Left ventricle myocardium inferior (tissue), 1 donor: ENCODE measurements at regions of chr6 and their contacts with region 1.

Region 1: DNA sequence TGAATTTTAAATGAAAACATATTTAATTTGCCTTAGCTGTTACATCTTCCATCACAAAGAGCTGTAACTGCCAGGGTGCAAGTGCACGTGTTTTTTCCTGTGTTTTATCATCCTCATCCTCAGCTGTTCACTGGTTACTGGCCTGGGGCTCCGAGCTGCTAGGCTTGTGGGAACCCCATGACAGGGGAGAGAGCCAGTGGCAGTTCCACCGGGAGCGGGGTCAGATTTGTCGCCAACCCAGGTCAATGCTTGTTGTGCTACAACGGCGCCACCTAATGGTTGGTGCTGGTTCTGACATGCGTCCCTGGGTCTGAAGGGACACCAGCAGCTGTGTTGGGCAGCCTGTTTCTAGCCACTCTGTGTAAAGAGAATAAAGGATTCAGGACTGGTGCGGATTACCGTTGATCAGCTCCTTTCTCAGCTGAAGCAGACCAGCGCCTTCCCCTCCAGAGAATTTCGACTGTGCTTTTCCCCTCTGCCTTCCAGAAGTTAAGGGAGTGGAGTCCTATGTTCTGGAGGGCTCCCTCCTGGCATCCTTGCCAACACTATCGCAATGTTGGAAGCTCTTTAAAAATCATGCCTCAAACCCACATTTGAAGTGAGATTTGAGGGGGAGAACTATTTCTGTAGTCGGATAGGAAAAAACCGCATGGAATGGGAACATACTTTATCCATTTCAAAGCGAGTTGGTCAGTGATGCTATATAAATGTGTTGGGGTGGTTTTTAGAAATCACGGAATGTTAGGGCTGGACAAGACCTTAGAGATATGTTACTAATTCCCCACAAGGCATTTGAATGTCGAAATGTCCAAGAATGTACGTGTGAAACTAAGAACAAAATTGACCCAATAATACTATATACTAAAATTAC is 32.1 kb downstream of the SUMO4 start:
- DNase-seq: peak; percentile 89
- H3K4me3 ChIP-seq: no peak overlapping the region
- H3K27ac ChIP-seq: no peak overlapping the region
- H3K4me1 ChIP-seq: peaks cover 4% of the 10 kb centered on the region
- H3K27me3 ChIP-seq: peaks cover 21% of the 10 kb centered on the region
- CTCF ChIP-seq: peak; percentile 98

Region 2: GRCh38 chr6:149082286-149082707 is 349.8 kb before region 1 on chr6:
- intact Hi-C with region 1: loop called (anchors 5 kb)
- DNase-seq: peak; percentile 74
- H3K4me3 ChIP-seq: no peak overlapping the region
- H3K27ac ChIP-seq: no peak overlapping the region
- H3K4me1 ChIP-seq: peaks cover 20% of the 10 kb centered on the region
- H3K27me3 ChIP-seq: peaks cover 4% of the 10 kb centered on the region
- CTCF ChIP-seq: peak; percentile 88